ENCODE measurements at regions of chr3 and their contacts with region 1.

Region 1: GRCh38 chr3:188780193-188781147 is 391.3 kb upstream of the TPRG1 start:
- DNase-seq: peak in 2 of 3 donors; percentile 45 to 72
- ATAC-seq: peak; percentile 85 to 92
- H3K4me3 ChIP-seq: no peak overlapping the region
- H3K27ac ChIP-seq: peak overlapping the region; percentile 39
- H3K4me1 ChIP-seq: peaks cover 7% of the 10 kb centered on the region
- H3K27me3 ChIP-seq: no peaks in the 10 kb centered on the region

Region 2: DNA sequence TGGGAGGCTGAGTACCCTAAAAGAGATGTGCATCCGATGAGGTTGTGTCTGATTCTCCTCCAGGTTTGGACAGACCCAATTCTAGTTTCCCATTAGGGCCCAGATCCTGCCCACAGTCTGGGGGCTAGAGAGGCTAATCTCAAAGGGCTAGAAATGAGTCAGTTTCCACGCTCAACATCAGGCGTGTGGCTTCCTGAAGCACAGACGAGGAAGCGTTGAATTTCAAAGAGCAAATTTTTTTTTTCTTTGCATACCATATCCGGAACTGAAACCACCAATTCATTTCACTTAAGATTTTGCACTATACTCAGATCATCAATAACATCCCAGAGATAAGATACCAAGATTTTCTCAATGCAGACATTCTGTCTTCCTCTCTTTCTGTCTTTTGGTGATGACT is 861.4 kb before region 1 on chr3:
- intact Hi-C with region 1: no loop called
- DNase-seq: no peak
- ATAC-seq: no peak
- H3K4me3 ChIP-seq: no peak overlapping the region
- H3K27ac ChIP-seq: no peak overlapping the region
- H3K4me1 ChIP-seq: peaks cover 8% of the 10 kb centered on the region
- H3K27me3 ChIP-seq: no peaks in the 10 kb centered on the region

Region 3: DNA sequence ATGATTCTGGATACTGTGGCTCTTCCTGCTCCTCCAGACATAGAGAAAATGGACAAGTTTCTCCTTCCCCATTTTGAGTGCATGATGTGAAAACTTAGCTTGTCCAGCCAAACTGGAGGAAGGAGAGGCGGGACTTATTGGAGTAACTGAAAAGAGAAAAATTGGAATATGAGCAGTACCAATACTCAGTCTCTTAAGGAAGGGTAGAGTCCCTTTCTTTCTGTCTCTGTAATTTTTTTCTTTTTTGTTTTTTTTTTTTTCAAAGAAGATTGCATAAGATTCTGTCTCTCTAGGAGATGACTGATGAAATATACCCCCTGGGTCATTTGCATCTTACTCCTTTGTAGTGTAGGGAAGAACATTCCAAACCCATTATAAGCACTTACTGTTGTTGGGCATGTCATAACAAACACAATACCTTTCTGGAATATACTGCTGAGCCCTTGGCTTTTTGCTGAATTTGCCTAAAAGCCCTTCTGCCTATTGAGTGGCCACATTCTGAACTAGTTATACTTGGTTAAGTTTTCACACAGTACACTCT is 106.8 kb before region 1 on chr3:
- intact Hi-C with region 1: loop called in 1 of 4 experiments (anchors 5 kb)
- DNase-seq: no peak
- ATAC-seq: peak; percentile 29 to 59
- H3K4me3 ChIP-seq: no peak overlapping the region
- H3K27ac ChIP-seq: peak overlapping the region; percentile 52
- H3K4me1 ChIP-seq: no peaks in the 10 kb centered on the region
- H3K27me3 ChIP-seq: no peaks in the 10 kb centered on the region